Adrenal gland (tissue), 19 donors: ENCODE measurements at regions of chr14 and their contacts with region 1.

Region 1: GRCh38 chr14:63388763-63389431 is 70.2 kb upstream of the GPHB5 start:
- DNase-seq: peak; percentile 56 to 81 (median 69)
- H3K4me3 ChIP-seq: no peak overlapping the region
- H3K27ac ChIP-seq: no peak overlapping the region
- H3K4me1 ChIP-seq: no peaks in the 10 kb centered on the region
- H3K27me3 ChIP-seq: no peaks in the 10 kb centered on the region
- CTCF ChIP-seq: peak; percentile 75 to 93 (median 89)
- POLR2A ChIP-seq: no peak

Region 2: DNA sequence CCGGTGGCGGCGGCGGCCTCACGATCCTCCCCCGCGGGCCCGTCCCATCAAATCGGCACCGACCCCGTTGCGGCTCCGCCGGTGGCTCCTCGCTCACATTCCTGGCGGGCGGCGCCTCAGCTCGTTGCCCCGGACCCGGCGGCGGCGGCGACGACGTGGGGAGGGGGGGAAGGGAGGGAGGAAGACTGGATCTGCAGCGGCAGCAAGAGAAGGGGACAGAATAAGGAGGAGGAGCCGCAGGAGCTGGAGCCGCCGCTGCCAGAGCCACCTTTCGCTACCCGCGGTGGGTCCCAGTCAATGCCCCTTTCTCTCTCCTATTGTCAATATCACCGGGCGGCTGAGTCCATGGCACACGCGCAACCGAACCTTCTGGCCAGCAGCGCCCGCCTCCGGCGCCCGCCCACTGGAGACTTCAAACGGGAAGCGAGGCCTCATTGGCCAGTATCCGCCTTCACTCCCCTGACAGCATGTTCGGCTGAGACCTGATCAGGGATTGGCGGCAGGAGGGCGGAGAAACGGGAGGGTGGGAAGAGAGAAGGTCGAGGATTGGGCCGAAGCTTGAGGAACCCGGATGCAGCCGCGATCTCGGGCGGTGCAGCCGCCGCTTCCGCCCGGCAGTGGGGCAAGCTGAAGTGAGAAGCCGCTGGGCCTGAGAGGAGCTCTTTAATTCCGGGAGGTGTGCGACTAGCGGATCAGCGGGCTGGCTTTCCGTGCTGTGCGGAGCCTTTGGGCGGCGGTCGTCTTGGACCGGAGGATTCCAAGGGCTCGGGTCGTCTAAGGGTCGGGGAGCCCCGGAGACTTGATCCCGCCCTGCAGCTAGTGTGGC is 154.3 kb after region 1 on chr14 and contains the start of gene PPP2R5E:
- intact Hi-C with region 1: loop called (anchors 2 to 5 kb)
- DNase-seq: peak; percentile 98 to 99 (median 99)
- H3K4me3 ChIP-seq: peak within 1 kb of the TSS; percentile 63 to 100 (median 86)
- H3K27ac ChIP-seq: peak within 1 kb of the TSS; percentile 51 to 89 (median 84)
- H3K4me1 ChIP-seq: peaks cover 7 to 27% of the 10 kb centered on the region in 2 donors
- H3K27me3 ChIP-seq: no peaks in the 10 kb centered on the region
- CTCF ChIP-seq: peak in 2 of 6 experiments; percentile 4 to 15
- POLR2A ChIP-seq: peak; percentile 60 to 82
- total RNA-seq, gene PPP2R5E: 13.4 to 46.5 (median 24.7) TPM

Region 3: GRCh38 chr14:63632932-63633514 is 244.1 kb after region 1 on chr14:
- intact Hi-C with region 1: loop called (anchors 5 to 10 kb)
- DNase-seq: no peak
- H3K4me3 ChIP-seq: no peak overlapping the region
- H3K27ac ChIP-seq: no peak overlapping the region
- H3K4me1 ChIP-seq: no peaks in the 10 kb centered on the region
- H3K27me3 ChIP-seq: no peaks in the 10 kb centered on the region
- CTCF ChIP-seq: peak; percentile 14 to 46 (median 38)
- POLR2A ChIP-seq: no peak

Region 4: DNA sequence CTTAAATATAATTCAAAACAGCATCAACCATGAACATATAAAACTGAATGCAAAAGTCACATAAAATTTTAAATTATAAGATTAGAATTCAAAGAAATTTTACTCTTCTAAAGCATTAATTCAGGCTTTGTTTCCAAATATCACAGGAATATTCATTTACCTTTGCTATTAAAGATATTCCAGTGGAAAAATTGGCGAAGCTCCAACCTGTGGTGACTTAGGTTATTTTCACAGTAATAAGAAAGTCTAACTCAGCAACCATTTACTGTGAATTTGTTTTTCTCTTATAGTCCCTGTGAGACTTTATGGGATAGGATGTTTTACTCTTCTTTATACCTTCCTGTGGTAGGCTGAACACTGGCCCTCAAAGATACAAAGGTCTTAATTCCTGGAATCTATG is 249.6 kb after region 1 on chr14:
- intact Hi-C with region 1: loop called (anchors 5 to 10 kb)
- DNase-seq: no peak
- H3K4me3 ChIP-seq: no peak overlapping the region
- H3K27ac ChIP-seq: no peak overlapping the region
- H3K4me1 ChIP-seq: peaks cover 4 to 8% of the 10 kb centered on the region in 2 donors
- H3K27me3 ChIP-seq: no peaks in the 10 kb centered on the region
- CTCF ChIP-seq: no peak
- POLR2A ChIP-seq: no peak